ENCODE measurements at regions of chr15 and their contacts with region 1.

Region 1: DNA sequence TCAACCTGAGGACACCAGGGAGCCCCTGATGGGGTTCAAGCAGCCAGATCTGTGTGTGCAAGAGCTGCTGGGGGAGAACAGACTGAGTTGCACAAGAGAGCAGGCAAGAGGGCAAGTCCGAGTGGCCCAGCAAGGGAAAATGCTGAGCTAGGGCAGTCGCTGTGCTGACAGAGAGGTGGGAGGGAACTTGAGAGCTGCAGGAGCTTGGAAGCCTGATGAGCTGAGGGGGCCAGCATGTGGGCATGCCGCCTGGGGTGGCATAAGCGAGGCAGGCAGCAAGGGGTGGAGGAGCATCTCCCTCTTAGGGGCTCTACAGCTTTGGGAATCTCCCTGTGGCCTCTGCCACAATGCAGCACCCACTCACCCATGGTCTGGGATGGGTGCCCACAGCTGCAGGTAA is 4.7 kb upstream of the CORO2B start:
- DNase-seq: no peak
- H3K4me3 ChIP-seq: no peak overlapping the region
- H3K27ac ChIP-seq: no peak overlapping the region
- H3K4me1 ChIP-seq: no peaks in the 10 kb centered on the region
- H3K27me3 ChIP-seq: no peaks in the 10 kb centered on the region
- CTCF ChIP-seq: no peak

Region 2: GRCh38 chr15:68739390-68740080 is 165.5 kb after region 1 on chr15:
- CTCF ChIA-PET with region 1: no interaction called
- POLR2A ChIA-PET with region 1: interaction called, 19 read pairs
- intact Hi-C with region 1: no loop called
- DNase-seq: no peak
- H3K4me3 ChIP-seq: no peak overlapping the region
- H3K27ac ChIP-seq: no peak overlapping the region
- H3K4me1 ChIP-seq: no peaks in the 10 kb centered on the region
- H3K27me3 ChIP-seq: no peaks in the 10 kb centered on the region
- CTCF ChIP-seq: no peak

Measured in PC-9 (cell line).